WTC11 (cell line): ENCODE measurements at regions of chr9 and their contacts with region 1.

Region 1: DNA sequence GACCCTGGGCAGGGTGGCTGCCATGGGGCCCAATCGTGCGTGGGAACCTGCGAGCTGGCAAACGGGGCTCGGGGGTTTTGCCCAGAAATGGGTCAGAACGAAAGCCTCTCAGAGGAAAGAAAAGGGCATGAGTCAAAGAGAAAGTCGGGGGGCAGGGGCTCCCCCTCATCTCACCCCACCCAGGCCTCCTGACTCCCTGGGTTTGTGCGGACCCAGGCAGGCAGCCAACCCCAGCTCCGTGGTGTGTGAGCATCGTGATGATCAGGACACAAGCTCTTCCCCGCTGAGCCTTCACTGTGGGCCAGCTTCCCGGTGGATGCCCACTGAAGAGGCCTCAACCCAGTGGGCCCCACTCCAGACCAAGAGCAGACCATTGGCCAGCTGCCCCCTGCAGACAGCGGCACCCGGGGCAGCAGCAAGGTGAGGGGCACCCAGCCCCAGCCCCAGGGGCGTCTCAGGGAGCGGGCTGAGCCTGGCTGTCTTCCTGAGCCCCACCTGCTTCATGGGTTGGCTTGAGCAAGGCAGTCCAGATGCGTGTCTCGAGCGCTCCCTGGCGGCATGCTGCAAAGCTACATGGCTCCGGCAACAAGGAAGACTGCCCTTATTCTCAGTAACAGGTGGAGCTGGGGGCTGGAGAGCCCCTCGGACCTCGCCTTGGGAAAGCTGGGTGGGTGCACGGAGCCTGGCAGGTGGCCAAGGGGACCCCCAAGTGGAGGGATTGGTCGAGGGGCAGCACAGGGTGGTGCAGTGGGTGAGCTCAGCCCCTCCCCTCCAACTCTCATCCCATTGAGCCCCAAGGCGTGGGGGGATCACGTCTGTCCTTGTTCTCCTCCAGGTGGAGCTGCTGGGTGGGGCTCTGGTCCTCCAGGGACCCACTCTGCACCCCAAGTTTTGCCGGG is 3.2 kb upstream of the FUT7 start:
- DNase-seq: peak; percentile 90
- ATAC-seq: peak; percentile 94
- H3K4me3 Mint-ChIP-seq: no peak overlapping the region
- H3K27ac Mint-ChIP-seq: no peak overlapping the region
- H3K4me1 Mint-ChIP-seq: no peaks in the 10 kb centered on the region
- H3K27me3 Mint-ChIP-seq: no peaks in the 10 kb centered on the region
- CTCF ChIP-seq: peak; percentile 83

Region 2: GRCh38 chr9:136769710-136770191 is 265.4 kb before region 1 on chr9:
- CTCF ChIA-PET with region 1: interaction called, 10 read pairs
- POLR2A ChIA-PET with region 1: no interaction called
- DNase-seq: peak; percentile 82
- ATAC-seq: peak; percentile 78
- H3K4me3 Mint-ChIP-seq: peak overlapping the region; percentile 47
- H3K27ac Mint-ChIP-seq: no peak overlapping the region
- H3K4me1 Mint-ChIP-seq: peaks cover 5% of the 10 kb centered on the region; the same call in 1 of the 2 replicates
- H3K27me3 Mint-ChIP-seq: peaks cover 14% of the 10 kb centered on the region
- CTCF ChIP-seq: peak; percentile 51

Region 3: DNA sequence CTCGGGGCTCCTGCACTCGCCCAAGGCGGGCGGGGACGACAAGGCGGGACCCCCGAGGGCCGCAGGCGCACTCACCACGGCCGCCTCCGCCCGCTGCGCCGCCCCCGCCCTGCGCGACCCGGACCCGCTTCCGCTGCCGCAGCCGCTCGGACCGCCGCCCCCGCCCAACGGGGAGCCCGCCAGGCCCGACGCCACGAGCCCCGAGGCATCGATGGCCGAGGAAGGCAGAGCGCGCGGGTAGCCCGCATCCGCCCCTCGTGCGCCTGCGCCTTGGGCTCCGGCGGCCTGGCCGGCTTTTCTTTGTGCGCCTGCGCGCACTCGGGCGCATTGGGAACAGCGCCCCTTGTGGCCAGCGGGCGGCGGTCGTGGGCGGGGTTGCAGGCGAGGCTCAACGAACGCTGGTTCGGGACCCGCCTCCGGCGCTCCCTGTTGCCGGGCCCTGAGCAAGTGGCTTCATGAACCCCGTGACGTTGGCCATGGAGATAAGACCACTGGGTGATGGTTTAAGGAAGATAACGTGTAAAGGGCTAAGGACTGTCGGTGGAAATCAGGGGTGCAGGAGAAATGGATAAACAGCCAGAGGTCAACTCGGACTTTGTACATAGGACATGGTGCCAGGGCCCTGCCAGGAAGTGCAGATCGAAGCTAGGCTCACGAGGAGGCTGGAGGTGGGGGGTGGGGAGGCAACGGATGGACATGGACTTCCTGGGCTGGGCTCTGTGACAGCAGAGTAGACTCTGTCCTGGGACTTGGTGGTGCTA is 90.4 kb before region 1 on chr9 and contains the starts of genes C8G and FBXW5:
- CTCF ChIA-PET with region 1: interaction called, 151 read pairs
- POLR2A ChIA-PET with region 1: interaction called, 4 read pairs
- DNase-seq: peak; percentile 94
- ATAC-seq: peak; percentile 58
- H3K4me3 Mint-ChIP-seq: peak within 1 kb of the TSS; percentile 67
- H3K27ac Mint-ChIP-seq: no peak within 1 kb of the TSS
- H3K4me1 Mint-ChIP-seq: peaks cover 10% of the 10 kb centered on the region
- H3K27me3 Mint-ChIP-seq: no peaks in the 10 kb centered on the region
- CTCF ChIP-seq: peak; percentile 99
- total RNA-seq, gene C8G: 0.85 to 1.7 TPM (median 1.5 TPM) in 3 replicates
- total RNA-seq, gene FBXW5: 58.2 to 70.5 TPM (median 63.9 TPM) in 3 replicates

Region 4: DNA sequence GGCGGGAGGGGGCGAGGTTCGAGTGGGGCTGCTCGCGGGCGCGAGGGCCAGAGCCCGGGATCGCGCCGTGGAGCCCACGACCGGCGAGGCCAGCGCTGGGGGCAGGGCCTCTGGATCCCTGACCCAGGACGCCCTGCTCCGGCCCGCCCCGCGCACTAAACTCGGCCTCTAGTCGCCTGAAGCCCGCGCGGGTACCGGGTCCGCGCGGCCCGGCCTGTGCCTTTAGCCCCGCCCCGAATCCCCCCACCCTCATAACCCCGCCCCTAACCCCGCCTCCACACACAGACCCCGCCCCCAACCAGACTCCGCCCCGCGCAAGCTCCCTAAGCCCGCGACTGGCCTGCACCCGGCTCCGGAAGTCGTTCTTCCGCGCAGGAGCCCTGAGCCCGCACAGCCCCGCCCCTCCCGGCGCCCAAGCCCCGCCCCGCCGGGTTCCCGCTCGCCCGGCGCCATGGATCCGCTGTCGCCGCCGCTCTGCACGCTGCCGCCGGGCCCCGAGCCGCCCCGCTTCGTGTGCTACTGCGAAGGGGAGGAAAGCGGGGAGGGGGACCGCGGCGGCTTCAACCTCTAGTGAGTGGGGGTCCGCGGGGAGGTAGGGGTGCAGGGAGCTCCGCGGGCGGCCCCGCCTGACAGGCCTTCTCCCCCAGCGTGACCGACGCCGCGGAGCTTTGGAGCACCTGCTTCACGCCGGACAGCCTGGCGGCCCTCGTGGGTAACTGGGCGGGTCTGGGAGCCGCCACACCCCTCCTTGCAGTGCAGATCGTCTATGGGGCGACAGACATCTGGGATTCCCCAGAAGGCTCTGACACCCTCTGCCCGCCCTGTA is 42.9 kb before region 1 on chr9 and contains the start of gene PAXX:
- CTCF ChIA-PET with region 1: interaction called, 53 read pairs
- POLR2A ChIA-PET with region 1: no interaction called
- DNase-seq: peak; percentile 93
- ATAC-seq: peak; percentile 90
- H3K4me3 Mint-ChIP-seq: peak within 1 kb of the TSS; percentile 72
- H3K27ac Mint-ChIP-seq: no peak within 1 kb of the TSS
- H3K4me1 Mint-ChIP-seq: no peaks in the 10 kb centered on the region; the same call in 1 of the 2 replicates
- H3K27me3 Mint-ChIP-seq: peaks cover 34% of the 10 kb centered on the region
- CTCF ChIP-seq: no peak
- total RNA-seq, gene PAXX: 44.1 to 45.3 TPM (median 44.6 TPM) in 3 replicates

Region 5: GRCh38 chr9:137046098-137046787 is 11.1 kb after region 1 on chr9 and contains the start of gene NPDC1:
- CTCF ChIA-PET with region 1: interaction called, 63 read pairs
- POLR2A ChIA-PET with region 1: interaction called, 3 read pairs
- DNase-seq: peak; percentile 94
- ATAC-seq: peak; percentile 69
- H3K4me3 Mint-ChIP-seq: peak within 1 kb of the TSS; percentile 77
- H3K27ac Mint-ChIP-seq: no peak within 1 kb of the TSS
- H3K4me1 Mint-ChIP-seq: peaks cover 10% of the 10 kb centered on the region
- H3K27me3 Mint-ChIP-seq: peaks cover 47% of the 10 kb centered on the region
- CTCF ChIP-seq: peak; percentile 83
- total RNA-seq, gene NPDC1: 64.3 to 68.8 TPM (median 64.5 TPM) in 3 replicates

Region 6: DNA sequence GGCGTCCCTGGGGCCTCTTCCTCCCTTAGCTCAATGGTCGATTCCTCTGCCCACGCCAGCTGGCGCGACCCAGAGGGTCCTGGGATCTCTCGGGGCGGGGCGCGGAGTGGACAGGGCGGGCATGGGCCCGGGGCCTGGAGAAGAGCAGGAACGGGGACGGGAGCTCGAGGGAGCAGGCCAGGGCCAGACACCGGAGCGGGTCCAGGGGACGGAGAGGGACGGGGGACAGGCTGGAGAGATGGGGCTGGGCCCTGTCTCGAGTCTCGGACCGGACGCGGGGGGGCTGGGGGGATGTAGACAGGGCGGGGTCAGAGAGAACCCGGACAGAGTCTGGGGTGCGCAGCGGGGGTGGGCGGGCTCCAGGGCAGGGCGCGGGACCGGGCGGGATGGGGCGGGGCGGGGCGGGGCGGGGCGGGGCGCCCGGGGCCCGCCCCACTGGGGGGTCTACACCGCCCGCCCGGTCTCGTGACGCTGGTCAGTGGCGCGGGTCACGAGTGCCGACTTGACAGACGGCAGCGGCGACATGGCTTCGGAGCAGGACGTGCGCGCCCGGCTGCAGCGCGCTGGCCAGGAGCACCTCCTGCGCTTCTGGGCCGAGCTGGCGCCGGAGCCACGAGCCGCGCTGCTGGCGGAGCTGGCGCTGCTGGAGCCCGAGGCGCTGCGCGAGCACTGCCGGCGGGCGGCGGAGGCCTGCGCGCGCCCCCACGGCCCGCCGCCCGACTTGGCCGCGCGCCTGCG is 42.1 kb after region 1 on chr9 and contains the start of gene UAP1L1:
- CTCF ChIA-PET with region 1: interaction called, 91 read pairs
- POLR2A ChIA-PET with region 1: no interaction called
- DNase-seq: peak; percentile 64
- ATAC-seq: peak; percentile 29
- H3K4me3 Mint-ChIP-seq: peak within 1 kb of the TSS; percentile 69
- H3K27ac Mint-ChIP-seq: no peak within 1 kb of the TSS
- H3K4me1 Mint-ChIP-seq: peaks cover 16% of the 10 kb centered on the region
- H3K27me3 Mint-ChIP-seq: peaks cover 36% of the 10 kb centered on the region
- CTCF ChIP-seq: no peak
- total RNA-seq, gene UAP1L1: 12.1 to 17.7 TPM (median 14.3 TPM) in 3 replicates

Region 7: DNA sequence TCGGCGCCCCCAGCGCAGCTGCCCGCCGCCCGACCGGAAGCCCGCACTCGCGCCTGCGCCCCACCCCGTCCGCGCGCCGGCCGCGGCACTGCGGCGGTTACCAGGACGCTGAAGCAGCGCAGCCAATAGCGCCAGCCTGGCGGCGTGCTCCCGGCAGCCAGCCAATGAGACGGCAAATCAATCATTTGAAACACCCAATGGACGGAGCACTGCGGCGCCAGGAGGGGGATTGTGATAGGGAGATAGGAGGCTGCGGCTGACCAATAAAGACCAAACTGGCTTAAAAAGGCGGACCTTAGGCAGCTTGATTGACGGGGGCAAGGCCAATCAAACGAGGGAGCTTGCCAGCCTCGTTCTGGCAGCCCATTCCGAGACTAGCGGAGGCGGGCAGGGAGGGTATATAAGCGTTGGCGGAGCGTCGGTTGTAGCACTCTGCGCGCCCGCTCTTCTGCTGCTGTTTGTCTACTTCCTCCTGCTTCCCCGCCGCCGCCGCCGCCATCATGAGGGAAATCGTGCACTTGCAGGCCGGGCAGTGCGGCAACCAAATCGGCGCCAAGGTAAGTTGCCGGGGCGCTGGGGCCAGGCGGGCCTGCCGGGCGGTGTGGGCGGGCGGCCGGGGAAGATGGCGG is 205.9 kb after region 1 on chr9 and contains the start of gene TUBB4B:
- CTCF ChIA-PET with region 1: interaction called, 18 read pairs
- POLR2A ChIA-PET with region 1: no interaction called
- DNase-seq: peak; percentile 98
- ATAC-seq: peak; percentile 80
- H3K4me3 Mint-ChIP-seq: peak within 1 kb of the TSS; percentile 81
- H3K27ac Mint-ChIP-seq: peak within 1 kb of the TSS; percentile 87; the same call in 1 of the 2 replicates
- H3K4me1 Mint-ChIP-seq: peaks cover 39% of the 10 kb centered on the region
- H3K27me3 Mint-ChIP-seq: no peaks in the 10 kb centered on the region
- CTCF ChIP-seq: no peak
- total RNA-seq, gene TUBB4B: 373 to 376 TPM (median 375 TPM) in 3 replicates